Endothelial cell of umbilical vein (primary cell): ENCODE measurements at regions of chr17 and their contacts with region 1.

Region 1: GRCh38 chr17:73255671-73256181 is 6.0 kb downstream of the CPSF4L start:
- DNase-seq: peak; percentile 53
- H3K4me3 ChIP-seq: no peak overlapping the region
- H3K27ac ChIP-seq: no peak overlapping the region
- H3K4me1 ChIP-seq: no peaks in the 10 kb centered on the region
- H3K27me3 ChIP-seq: no peaks in the 10 kb centered on the region
- CTCF ChIP-seq: peak; percentile 82 to 96
- POLR2A ChIP-seq: no peak

Region 2: GRCh38 chr17:73118951-73119391 is 136.8 kb before region 1 on chr17:
- CTCF ChIA-PET with region 1: no interaction called
- POLR2A ChIA-PET with region 1: no interaction called
- dilution Hi-C with region 1: no loop called
- intact Hi-C with region 1: no loop called
- DNase-seq: no peak
- H3K4me3 ChIP-seq: no peak overlapping the region
- H3K27ac ChIP-seq: no peak overlapping the region
- H3K4me1 ChIP-seq: no peaks in the 10 kb centered on the region
- H3K27me3 ChIP-seq: no peaks in the 10 kb centered on the region
- CTCF ChIP-seq: no peak
- POLR2A ChIP-seq: no peak

Region 3: DNA sequence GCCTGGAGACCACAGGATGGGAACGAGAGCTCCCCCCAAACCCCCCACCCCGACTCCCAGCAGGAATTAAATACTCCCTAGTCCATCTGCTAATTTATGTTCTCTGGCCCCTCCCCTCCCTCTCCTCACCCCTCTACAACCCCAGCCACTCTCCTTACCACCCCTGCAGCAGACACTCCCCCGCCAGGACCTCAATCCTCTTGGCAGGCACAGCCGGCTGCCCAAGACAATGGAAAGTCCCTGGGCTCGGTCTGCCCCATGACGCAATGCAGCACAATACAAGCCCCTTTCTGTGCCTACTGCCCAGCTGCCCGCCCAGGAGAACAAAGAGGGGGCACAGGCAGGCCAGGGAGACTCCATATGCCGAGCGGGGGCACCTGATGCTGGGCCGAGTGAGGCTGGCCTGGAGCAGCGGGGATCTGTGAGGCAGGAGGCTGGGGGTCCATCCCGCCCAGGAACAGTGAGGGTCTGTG is 86.4 kb after region 1 on chr17:
- CTCF ChIA-PET with region 1: interaction called, 15 read pairs
- POLR2A ChIA-PET with region 1: no interaction called
- dilution Hi-C with region 1: no loop called
- intact Hi-C with region 1: no loop called
- DNase-seq: peak; percentile 86
- H3K4me3 ChIP-seq: no peak overlapping the region
- H3K27ac ChIP-seq: peak overlapping the region; percentile 16
- H3K4me1 ChIP-seq: peaks cover 8% of the 10 kb centered on the region
- H3K27me3 ChIP-seq: no peaks in the 10 kb centered on the region
- CTCF ChIP-seq: no peak
- POLR2A ChIP-seq: no peak